ENCODE measurements at regions of chr6 and their contacts with region 1.

Region 1: DNA sequence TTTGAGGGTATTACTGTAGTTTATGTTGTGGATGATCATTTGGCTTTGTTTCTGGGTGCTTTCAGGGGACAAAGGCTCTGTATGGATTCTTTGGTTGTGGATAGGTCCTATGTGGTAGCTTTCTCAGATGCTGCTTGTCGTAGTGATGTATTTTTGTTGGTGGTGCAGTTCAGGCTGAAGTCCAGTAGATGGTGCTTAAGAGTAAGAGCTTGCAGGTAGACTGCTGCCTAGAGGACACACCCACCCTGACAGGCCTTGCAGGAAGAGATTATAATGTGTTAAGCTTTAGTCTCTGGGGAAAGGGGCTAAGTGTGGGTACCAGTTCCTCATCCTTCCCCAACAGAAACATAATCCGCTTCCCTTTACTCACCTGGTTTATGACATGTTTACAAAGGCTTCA is 62.6 kb upstream of the ADGRB3 start:
- DNase-seq: peak; percentile 64
- ATAC-seq: peak; percentile 81
- H3K4me3 ChIP-seq: no peak overlapping the region
- H3K27ac ChIP-seq: no peak overlapping the region
- H3K4me1 ChIP-seq: no peaks in the 10 kb centered on the region
- H3K27me3 ChIP-seq: no peaks in the 10 kb centered on the region
- CTCF ChIP-seq: peak; percentile 63

Region 2: GRCh38 chr6:67458265-67458664 is 1114.3 kb before region 1 on chr6:
- CTCF ChIA-PET with region 1: no interaction called
- POLR2A ChIA-PET with region 1: no interaction called
- intact Hi-C with region 1: no loop called
- DNase-seq: no peak
- ATAC-seq: no peak
- H3K4me3 ChIP-seq: no peak overlapping the region
- H3K27ac ChIP-seq: no peak overlapping the region
- H3K4me1 ChIP-seq: no peaks in the 10 kb centered on the region
- H3K27me3 ChIP-seq: no peaks in the 10 kb centered on the region
- CTCF ChIP-seq: no peak

Region 3: GRCh38 chr6:68778356-68779020 is 206.0 kb after region 1 on chr6:
- CTCF ChIA-PET with region 1: no interaction called
- POLR2A ChIA-PET with region 1: no interaction called
- intact Hi-C with region 1: loop called (anchors 5 kb)
- DNase-seq: peak; percentile 50
- ATAC-seq: peak; percentile 62
- H3K4me3 ChIP-seq: no peak overlapping the region
- H3K27ac ChIP-seq: no peak overlapping the region
- H3K4me1 ChIP-seq: no peaks in the 10 kb centered on the region
- H3K27me3 ChIP-seq: no peaks in the 10 kb centered on the region
- CTCF ChIP-seq: peak; percentile 68

Measured in PC-3 (cell line).